ENCODE measurements at regions of chr17 and their contacts with region 1.

Region 1: GRCh38 chr17:6660805-6661463 is 9.4 kb downstream of the C17orf100 start:
- DNase-seq: no peak
- H3K4me3 ChIP-seq: no peak overlapping the region
- H3K27ac ChIP-seq: no peak overlapping the region
- H3K4me1 ChIP-seq: no peaks in the 10 kb centered on the region
- H3K27me3 ChIP-seq: no peaks in the 10 kb centered on the region
- CTCF ChIP-seq: no peak
- EP300 ChIP-seq: no peak
- POLR2A ChIP-seq: no peak

Region 2: DNA sequence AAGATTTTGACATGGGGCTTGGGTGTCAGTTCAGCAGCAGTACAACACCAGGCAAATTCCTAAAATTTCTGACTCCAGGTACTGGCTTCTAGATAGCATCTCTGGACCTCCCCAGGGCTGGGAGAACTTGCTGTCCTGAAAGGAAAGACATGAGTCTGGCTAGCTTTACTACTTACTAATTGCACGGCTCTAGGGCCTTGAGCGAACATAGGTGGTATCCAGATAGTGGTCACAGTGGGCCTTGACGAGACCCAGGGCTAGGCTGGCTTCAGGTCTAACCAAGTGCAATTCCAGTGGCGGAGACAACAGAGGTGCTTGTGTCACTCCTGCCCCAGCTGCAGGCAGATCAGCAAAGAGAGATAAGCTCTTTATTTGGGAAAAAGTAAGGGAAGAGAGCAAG is 68.6 kb after region 1 on chr17:
- intact Hi-C with region 1: no loop called
- DNase-seq: no peak
- H3K4me3 ChIP-seq: no peak overlapping the region
- H3K27ac ChIP-seq: no peak overlapping the region
- H3K4me1 ChIP-seq: no peaks in the 10 kb centered on the region
- H3K27me3 ChIP-seq: no peaks in the 10 kb centered on the region
- CTCF ChIP-seq: no peak
- EP300 ChIP-seq: no peak
- POLR2A ChIP-seq: no peak

Region 3: GRCh38 chr17:7147772-7148171 is 486.8 kb after region 1 on chr17:
- intact Hi-C with region 1: loop called in 1 of 4 experiments (anchors 5 kb)
- DNase-seq: no peak
- H3K4me3 ChIP-seq: no peak overlapping the region
- H3K27ac ChIP-seq: no peak overlapping the region
- H3K4me1 ChIP-seq: no peaks in the 10 kb centered on the region
- H3K27me3 ChIP-seq: no peaks in the 10 kb centered on the region
- CTCF ChIP-seq: no peak
- EP300 ChIP-seq: no peak
- POLR2A ChIP-seq: no peak

Measured in ovary (tissue), 10 donors.